ENCODE measurements at regions of chr10 and their contacts with region 1.

Region 1: GRCh38 chr10:72692057-72692910 is at the start of gene MCU:
- DNase-seq: peak; percentile 98
- ATAC-seq: peak; percentile 99
- total RNA-seq, gene MCU: 15.1 TPM

Region 2: GRCh38 chr10:71475243-71475871 is 1216.9 kb before region 1 on chr10:
- intact Hi-C with region 1: no loop called
- DNase-seq: no peak
- ATAC-seq: peak; percentile 45

Region 3: DNA sequence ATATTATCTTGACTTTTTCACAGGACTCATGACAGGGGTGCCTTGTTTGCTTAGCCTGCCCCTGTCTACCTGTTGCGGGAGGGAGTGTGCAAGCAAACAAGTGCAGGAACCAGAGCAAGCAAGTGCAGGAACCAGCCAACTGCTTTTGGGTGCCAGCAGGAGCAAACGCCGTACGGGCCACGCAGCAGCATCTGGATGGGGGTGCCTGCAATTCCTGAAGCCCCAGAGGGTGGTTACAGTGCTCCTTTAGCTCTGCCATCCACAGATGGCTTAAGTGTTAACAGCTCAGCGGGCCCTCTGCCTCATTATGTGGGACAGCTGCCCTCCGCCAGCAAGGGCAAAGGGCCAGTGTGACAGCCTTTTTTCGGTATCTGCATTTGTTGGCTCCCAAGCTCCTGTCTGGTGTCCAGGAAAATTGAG is 149.9 kb before region 1 on chr10:
- intact Hi-C with region 1: no loop called
- DNase-seq: no peak
- ATAC-seq: no peak

Region 4: DNA sequence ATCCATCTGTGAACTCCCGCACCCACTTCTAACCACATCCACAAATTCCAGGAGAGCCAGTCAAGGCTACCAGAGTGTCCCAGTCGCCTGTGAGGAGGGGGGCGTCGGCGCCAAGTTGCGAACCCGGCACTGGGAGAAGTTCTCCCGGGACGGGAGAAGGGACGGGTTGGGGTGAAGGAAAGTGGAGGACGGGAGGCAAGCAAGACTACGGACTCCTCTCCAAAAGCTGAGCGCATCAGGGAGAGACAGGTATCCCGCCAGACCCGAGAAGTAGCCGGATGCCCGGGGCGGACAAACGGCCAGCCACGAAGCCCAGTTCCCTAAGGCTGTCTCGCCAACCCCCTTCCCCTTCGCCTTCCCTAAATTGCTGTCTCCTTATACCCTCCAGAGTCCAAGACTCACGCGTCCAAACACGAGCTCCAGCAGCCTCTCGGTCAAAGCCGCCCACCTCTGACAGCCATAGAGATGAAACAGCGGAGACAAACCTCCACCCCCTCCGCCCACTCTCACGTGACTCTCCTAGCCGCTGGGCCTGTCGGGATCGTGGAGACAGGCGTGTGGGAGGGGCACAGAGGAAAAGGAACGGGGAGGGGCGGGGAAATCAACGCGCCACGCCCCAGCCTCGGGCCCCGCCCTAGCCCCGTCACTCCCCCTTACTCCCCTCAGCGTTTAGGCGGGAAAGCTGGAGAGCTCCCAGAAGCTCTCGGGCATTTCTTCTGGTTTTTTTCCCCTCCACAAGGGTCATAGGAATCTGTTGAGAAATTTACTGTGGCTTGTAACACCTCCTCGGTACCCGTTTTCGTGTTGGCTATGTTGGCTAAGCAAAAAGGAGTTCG is 66.5 kb before region 1 on chr10 and contains the start of gene MICU1:
- intact Hi-C with region 1: loop called (anchors 5 kb)
- DNase-seq: peak; percentile 97
- ATAC-seq: peak; percentile 100
- total RNA-seq, gene MICU1: 49.0 TPM

Region 5: DNA sequence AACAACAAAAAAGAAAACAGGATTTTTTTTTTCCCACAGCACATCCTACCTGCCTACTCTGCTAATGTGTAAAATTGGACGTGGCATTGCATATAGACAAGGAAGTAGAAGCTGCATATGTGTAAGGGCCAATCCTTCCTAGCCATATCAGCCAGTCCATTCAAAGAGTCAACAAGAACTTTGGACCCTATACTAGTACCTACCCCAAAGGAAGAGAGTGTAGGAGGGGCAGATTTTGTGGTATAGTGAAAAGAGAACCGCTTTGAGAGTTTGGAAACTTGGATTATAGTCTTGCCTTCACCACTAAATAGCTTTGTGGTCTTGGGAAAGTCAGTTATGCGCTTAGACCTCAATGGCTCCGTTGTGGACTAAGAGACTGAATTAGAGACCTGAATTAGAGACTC is 12.4 kb before region 1 on chr10:
- intact Hi-C with region 1: no loop called
- DNase-seq: no peak
- ATAC-seq: no peak

Region 6: DNA sequence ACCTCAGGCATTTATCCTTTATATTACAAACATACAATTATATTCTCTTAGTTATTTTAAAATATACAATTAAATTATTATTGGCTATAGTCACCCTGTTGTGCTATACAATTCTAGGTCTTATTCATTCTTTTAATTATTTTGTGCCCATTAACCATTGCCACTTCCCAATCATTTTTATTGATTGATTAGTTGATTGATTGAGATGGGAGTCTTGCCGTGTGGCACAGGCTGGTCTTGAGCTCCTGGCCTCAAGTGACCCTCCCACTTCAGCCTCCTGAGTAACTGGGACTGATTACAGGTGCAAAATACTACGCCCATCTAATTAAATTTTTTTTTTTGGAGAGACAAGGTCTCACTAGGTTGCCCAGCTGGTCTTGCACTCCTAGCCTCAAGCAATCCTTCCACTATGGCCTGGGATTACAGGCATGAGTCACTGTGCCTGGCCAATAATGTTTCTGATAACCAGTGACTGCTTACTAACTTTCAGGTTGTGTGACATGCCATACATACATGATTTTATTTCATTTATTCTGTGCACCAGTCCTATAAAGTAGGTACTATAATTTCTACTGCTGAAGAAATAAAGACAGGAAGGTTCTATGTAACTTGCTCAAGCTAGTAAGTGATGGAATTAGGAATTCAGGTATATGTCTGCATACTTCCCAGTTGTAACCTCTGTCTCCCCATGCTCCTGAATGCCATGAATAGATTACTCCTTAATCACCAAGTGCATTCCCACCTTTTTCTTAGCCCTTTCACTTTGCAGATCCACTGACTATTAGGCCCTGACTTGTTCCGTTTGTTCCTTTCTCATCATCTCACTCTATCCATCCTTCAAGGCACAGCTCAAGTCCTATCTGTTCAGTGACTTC is 27.7 kb after region 1 on chr10:
- intact Hi-C with region 1: no loop called
- DNase-seq: no peak
- ATAC-seq: no peak